Activated T-helper 1 cell treated with anti-CD3 and anti-CD28 coated beads, Interleukin-12 subunit alpha, Interleukin-12 subunit beta, Interleukin-2, Interleukin-4 antibody, amounts not matched to agents 30 ng/mL and 10 ng/mL and 1 ng/mL, durations not matched to agents 14 hours and 24 hours and 36 hours (primary cell): ENCODE measurements at regions of chr12 and their contacts with region 1.

Region 1: GRCh38 chr12:101280006-101280505 is at the start of gene UTP20:
- DNase-seq: peak; percentile 89
- H3K4me3 Mint-ChIP-seq: peak within 1 kb of the TSS; percentile 96
- H3K27ac Mint-ChIP-seq: peak within 1 kb of the TSS; percentile 75
- H3K4me1 Mint-ChIP-seq: peaks cover 22% of the 10 kb centered on the region
- H3K27me3 Mint-ChIP-seq: peaks cover 15% of the 10 kb centered on the region
- total RNA-seq, gene UTP20: 41.8 and 46.0 TPM in 2 replicates

Region 2: GRCh38 chr12:100266835-100267618 is 1013.0 kb before region 1 on chr12 and contains the starts of genes DEPDC4 and SCYL2:
- intact Hi-C with region 1: loop called (anchors 2 kb)
- DNase-seq: peak; percentile 88
- H3K4me3 Mint-ChIP-seq: peak within 1 kb of the TSS; percentile 99
- H3K27ac Mint-ChIP-seq: peak within 1 kb of the TSS; percentile 99
- H3K4me1 Mint-ChIP-seq: peaks cover 36% of the 10 kb centered on the region
- H3K27me3 Mint-ChIP-seq: no peaks in the 10 kb centered on the region
- total RNA-seq, gene DEPDC4: 1.1 and 2.1 TPM in 2 replicates
- total RNA-seq, gene SCYL2: 33.0 and 38.9 TPM in 2 replicates

Region 3: DNA sequence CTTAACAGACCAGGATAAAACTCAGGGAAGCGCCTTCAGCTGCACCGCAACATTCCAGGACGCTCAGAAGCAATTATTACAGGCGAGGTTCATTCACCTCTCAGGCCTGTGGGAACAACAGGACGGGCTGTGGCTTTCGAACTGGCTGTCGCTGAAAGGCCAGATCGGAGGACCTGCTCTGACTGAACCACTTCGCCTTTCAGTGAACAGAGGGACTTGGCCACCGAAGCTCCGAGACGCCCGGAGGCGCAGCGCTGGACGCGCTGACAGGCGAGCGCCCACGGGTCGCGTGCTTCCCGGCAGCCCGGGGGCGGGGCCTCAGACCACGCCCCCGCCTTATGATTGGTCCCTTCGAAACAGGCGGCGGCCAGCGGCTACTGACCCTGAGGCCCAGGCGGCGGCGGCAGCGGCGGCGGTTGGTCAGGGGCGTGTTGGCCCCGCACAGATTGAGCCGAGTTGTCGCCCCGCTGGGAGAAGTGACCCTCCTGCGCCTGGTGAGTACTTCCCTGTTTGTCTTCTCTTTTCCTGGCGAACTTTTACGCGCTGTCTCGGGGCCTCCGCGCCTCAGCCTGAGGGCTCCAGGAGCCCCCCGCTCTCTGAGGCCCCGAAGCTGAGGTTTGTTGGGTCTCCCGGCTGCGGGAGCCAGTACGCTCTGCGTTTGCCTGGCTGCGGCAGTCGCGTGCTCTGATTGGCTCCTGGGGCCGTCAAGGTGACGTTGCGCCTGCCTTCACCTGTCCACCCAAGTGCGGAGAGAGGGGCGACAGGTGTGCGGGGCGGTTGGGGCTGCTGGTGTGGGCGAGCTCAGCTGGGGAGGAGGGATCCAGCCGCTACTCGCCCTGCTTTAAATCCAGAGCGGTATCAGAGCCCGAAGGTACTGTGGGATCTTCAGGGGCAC is 706.5 kb before region 1 on chr12 and contains the start of gene GAS2L3:
- intact Hi-C with region 1: loop called (anchors 5 kb)
- DNase-seq: peak; percentile 69
- H3K4me3 Mint-ChIP-seq: peak within 1 kb of the TSS; percentile 88
- H3K27ac Mint-ChIP-seq: no peak within 1 kb of the TSS
- H3K4me1 Mint-ChIP-seq: peaks cover 13% of the 10 kb centered on the region
- H3K27me3 Mint-ChIP-seq: peaks cover 19% of the 10 kb centered on the region
- total RNA-seq, gene GAS2L3: 0.86 and 1.0 TPM in 2 replicates

Region 4: DNA sequence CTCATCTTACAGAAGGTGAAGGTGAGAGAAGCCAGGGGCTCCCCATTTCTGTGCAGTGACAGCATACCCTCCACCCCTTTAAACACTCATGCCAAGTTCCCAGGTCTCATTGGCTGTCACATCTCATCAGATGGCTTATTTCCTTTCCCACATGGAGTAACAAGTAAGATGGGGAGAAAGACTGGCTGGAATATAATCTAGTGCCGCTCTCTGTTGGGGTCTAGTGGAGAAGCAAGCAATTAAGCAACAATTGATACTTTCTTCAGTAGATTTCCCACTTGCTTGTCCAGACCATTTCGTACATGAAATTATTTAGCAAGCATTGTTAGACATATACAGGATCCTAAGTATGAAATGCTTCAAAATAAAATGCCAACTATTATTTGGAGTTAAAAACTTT is 162.2 kb before region 1 on chr12:
- intact Hi-C with region 1: no loop called
- DNase-seq: no peak
- H3K4me3 Mint-ChIP-seq: no peak overlapping the region
- H3K27ac Mint-ChIP-seq: no peak overlapping the region
- H3K4me1 Mint-ChIP-seq: no peaks in the 10 kb centered on the region
- H3K27me3 Mint-ChIP-seq: no peaks in the 10 kb centered on the region

Region 5: DNA sequence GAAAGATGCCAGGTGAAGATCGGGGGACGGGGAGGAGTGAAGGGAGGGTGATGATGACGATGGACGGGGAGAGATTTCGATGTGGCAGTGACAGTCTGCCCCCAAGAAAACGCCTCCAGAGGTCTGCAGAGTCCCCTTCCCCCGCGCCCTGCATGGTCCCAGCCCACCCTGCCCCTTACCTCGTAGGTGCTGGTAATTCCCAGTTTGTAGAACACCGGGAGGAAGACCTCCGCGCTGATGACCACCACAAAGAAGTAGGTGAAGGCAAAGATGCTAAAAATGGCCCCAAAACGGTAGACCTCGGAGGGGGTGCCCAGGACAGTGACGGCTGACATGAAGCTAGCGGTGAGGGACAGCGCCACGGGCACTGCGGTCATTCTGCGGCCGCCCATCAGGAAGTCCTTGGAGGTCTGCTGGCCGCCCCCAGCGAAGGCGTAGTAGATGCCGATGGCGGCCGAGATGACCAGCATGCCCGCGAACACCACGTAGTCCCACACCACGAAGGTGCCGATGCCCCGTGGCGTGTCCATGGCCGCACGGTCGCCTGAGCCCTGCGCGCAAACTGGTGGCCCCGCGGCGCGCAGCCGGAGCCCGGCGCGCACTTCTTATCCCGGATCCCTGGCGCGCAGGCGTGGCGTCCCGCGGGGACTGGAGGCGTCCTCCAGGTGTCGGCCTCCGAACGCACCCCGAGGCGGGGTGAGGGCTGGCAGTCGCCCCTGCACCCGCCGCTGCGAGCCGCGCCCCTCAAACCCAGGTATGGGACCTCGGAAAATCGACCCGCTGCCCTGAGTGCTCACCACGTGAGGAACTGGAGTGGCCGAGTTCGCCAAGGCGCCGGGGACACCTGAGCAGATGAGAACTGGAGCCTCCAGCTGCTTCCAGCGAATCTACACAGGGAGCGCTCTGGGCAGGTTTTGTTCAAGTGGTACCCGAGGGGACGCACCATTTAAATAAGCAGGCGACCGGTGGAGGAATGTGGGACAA is 70.4 kb before region 1 on chr12 and contains the start of gene SLC5A8:
- intact Hi-C with region 1: no loop called
- DNase-seq: no peak
- H3K4me3 Mint-ChIP-seq: no peak within 1 kb of the TSS
- H3K27ac Mint-ChIP-seq: no peak within 1 kb of the TSS
- H3K4me1 Mint-ChIP-seq: no peaks in the 10 kb centered on the region
- H3K27me3 Mint-ChIP-seq: peaks cover 25% of the 10 kb centered on the region
- total RNA-seq, gene SLC5A8: not detected in 2 replicates

Region 6: GRCh38 chr12:101298426-101298825 is 18.4 kb after region 1 on chr12:
- intact Hi-C with region 1: loop called (anchors 2 kb)
- DNase-seq: no peak
- H3K4me3 Mint-ChIP-seq: no peak overlapping the region
- H3K27ac Mint-ChIP-seq: no peak overlapping the region
- H3K4me1 Mint-ChIP-seq: no peaks in the 10 kb centered on the region
- H3K27me3 Mint-ChIP-seq: no peaks in the 10 kb centered on the region

Region 7: GRCh38 chr12:101407436-101408345 is 127.6 kb after region 1 on chr12 and contains the start of gene ARL1:
- intact Hi-C with region 1: loop called (anchors 2 kb)
- DNase-seq: peak; percentile 68
- H3K4me3 Mint-ChIP-seq: peak within 1 kb of the TSS; percentile 99
- H3K27ac Mint-ChIP-seq: peak within 1 kb of the TSS; percentile 95
- H3K4me1 Mint-ChIP-seq: peaks cover 25% of the 10 kb centered on the region
- H3K27me3 Mint-ChIP-seq: peaks cover 9% of the 10 kb centered on the region
- total RNA-seq, gene ARL1: 70.8 and 76.9 TPM in 2 replicates

Region 8: GRCh38 chr12:102119674-102120563 is 839.9 kb after region 1 on chr12 and contains the starts of genes NUP37 and PARPBP:
- intact Hi-C with region 1: loop called (anchors 2 kb)
- DNase-seq: peak; percentile 92
- H3K4me3 Mint-ChIP-seq: peak within 1 kb of the TSS; percentile 92
- H3K27ac Mint-ChIP-seq: peak within 1 kb of the TSS; percentile 95
- H3K4me1 Mint-ChIP-seq: peaks cover 48% of the 10 kb centered on the region
- H3K27me3 Mint-ChIP-seq: no peaks in the 10 kb centered on the region
- total RNA-seq, gene NUP37: 81.5 and 84.1 TPM in 2 replicates
- total RNA-seq, gene PARPBP: 23.5 and 25.1 TPM in 2 replicates

Region 9: GRCh38 chr12:102419094-102419764 is 1139.2 kb after region 1 on chr12:
- intact Hi-C with region 1: no loop called
- DNase-seq: no peak
- H3K4me3 Mint-ChIP-seq: no peak overlapping the region
- H3K27ac Mint-ChIP-seq: no peak overlapping the region
- H3K4me1 Mint-ChIP-seq: peaks cover 15% of the 10 kb centered on the region
- H3K27me3 Mint-ChIP-seq: peaks cover 6% of the 10 kb centered on the region